Endothelial cell of umbilical vein (primary cell): ENCODE measurements at regions of chr3 and their contacts with region 1.

Region 1: DNA sequence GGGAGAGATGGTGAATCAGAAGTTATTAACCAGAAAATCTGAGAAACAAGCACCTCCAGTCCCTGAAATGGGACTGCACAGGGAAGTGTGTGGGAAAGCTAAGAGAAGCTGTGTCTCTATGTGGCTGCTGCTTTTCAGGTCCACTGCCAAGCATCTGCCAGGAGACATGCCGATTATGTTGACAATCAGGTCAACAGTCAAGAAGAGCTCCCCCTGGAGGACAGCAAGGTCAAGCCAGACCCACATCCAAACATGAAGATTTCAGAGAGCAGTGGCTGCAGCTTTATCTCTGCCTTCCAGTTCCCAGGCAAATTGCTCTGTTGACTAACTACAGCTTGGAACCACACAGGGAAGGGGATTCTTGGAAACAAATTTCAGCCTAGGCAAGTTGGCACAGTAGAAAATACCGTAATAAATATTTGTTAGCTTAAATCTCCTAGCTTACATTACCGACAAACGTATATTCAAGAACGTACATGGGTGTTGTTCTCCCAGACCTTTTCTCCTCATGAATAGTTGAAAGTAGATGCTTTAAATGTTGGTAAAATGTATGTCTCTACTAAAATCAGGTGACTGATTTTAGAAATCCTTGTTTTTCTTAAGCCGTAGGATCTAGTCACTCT is 394.5 kb upstream of the RARB start:
- DNase-seq: peak; percentile 15
- H3K4me3 ChIP-seq: no peak overlapping the region
- H3K27ac ChIP-seq: no peak overlapping the region
- H3K4me1 ChIP-seq: no peaks in the 10 kb centered on the region
- H3K27me3 ChIP-seq: no peaks in the 10 kb centered on the region
- CTCF ChIP-seq: peak; percentile 60 to 61
- POLR2A ChIP-seq: no peak

Region 2: GRCh38 chr3:24773798-24774197 is 259.7 kb before region 1 on chr3:
- CTCF ChIA-PET with region 1: interaction called, 25 read pairs
- POLR2A ChIA-PET with region 1: no interaction called
- dilution Hi-C with region 1: no loop called
- intact Hi-C with region 1: loop called (anchors 2 kb)
- DNase-seq: peak; percentile 61
- H3K4me3 ChIP-seq: no peak overlapping the region
- H3K27ac ChIP-seq: no peak overlapping the region
- H3K4me1 ChIP-seq: no peaks in the 10 kb centered on the region
- H3K27me3 ChIP-seq: no peaks in the 10 kb centered on the region
- CTCF ChIP-seq: peak; percentile 69 to 71
- POLR2A ChIP-seq: no peak

Region 3: DNA sequence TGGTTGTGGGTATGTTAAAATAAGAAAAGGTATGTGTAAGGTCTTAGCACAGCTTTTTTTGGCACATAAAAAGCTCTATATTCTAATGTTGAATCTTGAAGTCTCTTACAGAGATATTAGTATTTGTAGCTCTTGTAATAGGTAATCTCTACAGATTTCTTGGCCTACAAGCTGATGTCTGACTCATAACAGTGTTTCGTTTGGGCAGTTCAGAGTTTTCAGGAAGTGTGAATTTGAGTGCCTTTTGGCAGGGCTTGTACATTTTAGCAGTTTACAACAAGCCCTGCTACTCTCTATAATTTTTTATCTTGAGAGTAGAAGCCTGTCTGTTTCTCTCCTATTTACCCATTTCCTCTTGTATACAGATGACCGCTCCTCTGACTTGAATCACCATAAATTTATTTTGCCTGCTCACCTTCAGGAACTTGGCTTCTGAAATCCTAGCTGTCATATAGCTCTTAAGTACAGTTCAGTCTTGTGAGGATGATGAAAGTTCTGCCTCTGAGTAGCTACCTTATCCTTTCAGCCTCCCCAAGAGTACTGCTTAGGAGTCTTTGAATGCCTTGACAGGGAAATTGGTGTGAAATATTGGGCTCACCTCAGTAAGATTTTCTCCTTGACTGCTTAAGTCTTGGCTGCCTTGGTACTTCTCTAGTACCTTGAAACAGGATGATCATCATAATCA is 25.4 kb before region 1 on chr3:
- CTCF ChIA-PET with region 1: interaction called, 12 read pairs
- POLR2A ChIA-PET with region 1: no interaction called
- dilution Hi-C with region 1: no loop called
- intact Hi-C with region 1: no loop called
- DNase-seq: peak; percentile 4
- H3K4me3 ChIP-seq: no peak overlapping the region
- H3K27ac ChIP-seq: no peak overlapping the region
- H3K4me1 ChIP-seq: no peaks in the 10 kb centered on the region
- H3K27me3 ChIP-seq: no peaks in the 10 kb centered on the region
- CTCF ChIP-seq: no peak
- POLR2A ChIP-seq: no peak

Region 4: DNA sequence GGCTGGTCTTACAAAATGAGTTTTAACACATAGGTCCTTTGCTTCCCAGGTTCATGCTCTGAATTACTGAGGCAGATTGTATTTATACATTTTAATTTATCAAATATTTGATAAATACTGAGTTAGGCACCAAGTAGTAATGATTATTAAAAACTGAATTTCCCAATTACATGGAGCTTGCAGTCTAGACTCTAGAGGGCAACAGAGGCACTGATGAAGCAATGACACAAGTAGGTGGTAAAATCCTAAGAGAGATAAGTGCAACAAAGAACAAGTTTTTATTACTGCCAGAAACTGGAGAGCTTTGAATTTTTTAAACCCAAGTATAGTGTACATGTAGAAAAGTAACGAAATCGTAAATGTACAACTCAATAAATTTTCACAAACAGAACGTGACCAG is 11.7 kb before region 1 on chr3:
- CTCF ChIA-PET with region 1: interaction called, 38 read pairs
- POLR2A ChIA-PET with region 1: no interaction called
- dilution Hi-C with region 1: no loop called
- intact Hi-C with region 1: no loop called
- DNase-seq: peak; percentile 42
- H3K4me3 ChIP-seq: no peak overlapping the region
- H3K27ac ChIP-seq: no peak overlapping the region
- H3K4me1 ChIP-seq: no peaks in the 10 kb centered on the region
- H3K27me3 ChIP-seq: no peaks in the 10 kb centered on the region
- CTCF ChIP-seq: peak; percentile 18 to 45
- POLR2A ChIP-seq: no peak

Region 5: GRCh38 chr3:25044762-25045710 is 11.5 kb after region 1 on chr3:
- CTCF ChIA-PET with region 1: interaction called, 27 read pairs
- POLR2A ChIA-PET with region 1: no interaction called
- dilution Hi-C with region 1: no loop called
- intact Hi-C with region 1: no loop called
- DNase-seq: peak; percentile 39
- H3K4me3 ChIP-seq: no peak overlapping the region
- H3K27ac ChIP-seq: no peak overlapping the region
- H3K4me1 ChIP-seq: no peaks in the 10 kb centered on the region
- H3K27me3 ChIP-seq: no peaks in the 10 kb centered on the region
- CTCF ChIP-seq: no peak
- POLR2A ChIP-seq: no peak

Region 6: DNA sequence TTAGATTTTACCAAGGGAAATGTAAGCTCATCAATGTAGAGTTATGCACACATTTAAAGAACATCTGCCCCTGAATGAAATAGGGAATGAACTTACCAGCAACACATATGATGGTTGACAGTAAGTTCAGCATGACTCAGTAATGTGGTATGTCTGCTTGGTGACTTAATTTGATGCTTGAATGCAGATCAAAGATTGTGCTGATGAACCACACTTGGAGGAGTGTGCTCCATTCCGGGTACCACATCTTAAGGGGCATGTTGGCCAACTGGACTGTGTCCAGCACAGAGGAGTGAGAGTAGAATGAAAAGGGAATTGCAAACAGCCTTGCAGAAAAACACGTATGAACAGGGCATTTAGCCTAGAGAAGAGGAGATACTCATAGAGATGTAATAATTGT is 223.5 kb after region 1 on chr3:
- CTCF ChIA-PET with region 1: no interaction called
- POLR2A ChIA-PET with region 1: no interaction called
- dilution Hi-C with region 1: no loop called
- intact Hi-C with region 1: no loop called
- DNase-seq: no peak
- H3K4me3 ChIP-seq: no peak overlapping the region
- H3K27ac ChIP-seq: no peak overlapping the region
- H3K4me1 ChIP-seq: no peaks in the 10 kb centered on the region
- H3K27me3 ChIP-seq: no peaks in the 10 kb centered on the region
- CTCF ChIP-seq: no peak
- POLR2A ChIP-seq: no peak